SK-N-SH (cell line): ENCODE measurements at regions of chr20 and their contacts with region 1.

Region 1: GRCh38 chr20:40990542-40991120 is 38.0 kb upstream of the TOP1 start:
- DNase-seq: peak; percentile 84
- H3K4me3 ChIP-seq: no peak overlapping the region; a peak in 1 of 4 replicates
- H3K27ac ChIP-seq: no peak overlapping the region
- H3K4me1 ChIP-seq: peaks cover 2 to 11% of the 10 kb centered on the region in 2 experiments; a peak in 2 of 4 replicates
- H3K27me3 ChIP-seq: no peaks in the 10 kb centered on the region
- CTCF ChIP-seq: peak; percentile 85
- EP300 ChIP-seq: no peak
- RAD21 ChIP-seq: peak; percentile 94

Region 2: DNA sequence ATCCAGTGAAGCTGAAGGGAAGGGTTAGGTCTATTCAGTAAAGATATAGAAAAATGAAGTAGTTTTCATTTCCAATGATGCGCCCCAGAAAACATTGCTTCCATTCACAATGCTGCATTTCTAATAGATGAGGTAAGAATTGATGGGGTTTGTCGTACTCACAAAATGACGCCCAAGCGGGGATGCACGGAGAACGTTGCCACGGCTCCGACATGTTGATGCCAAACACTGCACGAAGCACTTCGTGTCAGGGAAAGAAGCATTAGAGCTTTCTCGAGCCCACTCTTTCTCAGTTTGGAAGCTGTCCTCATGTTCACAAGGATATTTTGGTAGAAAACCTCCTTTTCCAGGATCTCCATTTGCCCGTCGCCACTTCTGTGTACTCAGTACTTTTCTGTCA is 280.0 kb before region 1 on chr20:
- CTCF ChIA-PET with region 1: no interaction called
- POLR2A ChIA-PET with region 1: no interaction called
- DNase-seq: no peak
- H3K4me3 ChIP-seq: no peak overlapping the region
- H3K27ac ChIP-seq: no peak overlapping the region
- H3K4me1 ChIP-seq: no peaks in the 10 kb centered on the region; a peak in 1 of 4 replicates
- H3K27me3 ChIP-seq: no peaks in the 10 kb centered on the region
- CTCF ChIP-seq: no peak
- EP300 ChIP-seq: no peak
- RAD21 ChIP-seq: no peak

Region 3: GRCh38 chr20:40821429-40821828 is 169.2 kb before region 1 on chr20:
- CTCF ChIA-PET with region 1: no interaction called
- POLR2A ChIA-PET with region 1: no interaction called
- DNase-seq: no peak
- H3K4me3 ChIP-seq: no peak overlapping the region
- H3K27ac ChIP-seq: no peak overlapping the region
- H3K4me1 ChIP-seq: no peaks in the 10 kb centered on the region
- H3K27me3 ChIP-seq: no peaks in the 10 kb centered on the region
- CTCF ChIP-seq: no peak
- EP300 ChIP-seq: no peak
- RAD21 ChIP-seq: no peak

Region 4: DNA sequence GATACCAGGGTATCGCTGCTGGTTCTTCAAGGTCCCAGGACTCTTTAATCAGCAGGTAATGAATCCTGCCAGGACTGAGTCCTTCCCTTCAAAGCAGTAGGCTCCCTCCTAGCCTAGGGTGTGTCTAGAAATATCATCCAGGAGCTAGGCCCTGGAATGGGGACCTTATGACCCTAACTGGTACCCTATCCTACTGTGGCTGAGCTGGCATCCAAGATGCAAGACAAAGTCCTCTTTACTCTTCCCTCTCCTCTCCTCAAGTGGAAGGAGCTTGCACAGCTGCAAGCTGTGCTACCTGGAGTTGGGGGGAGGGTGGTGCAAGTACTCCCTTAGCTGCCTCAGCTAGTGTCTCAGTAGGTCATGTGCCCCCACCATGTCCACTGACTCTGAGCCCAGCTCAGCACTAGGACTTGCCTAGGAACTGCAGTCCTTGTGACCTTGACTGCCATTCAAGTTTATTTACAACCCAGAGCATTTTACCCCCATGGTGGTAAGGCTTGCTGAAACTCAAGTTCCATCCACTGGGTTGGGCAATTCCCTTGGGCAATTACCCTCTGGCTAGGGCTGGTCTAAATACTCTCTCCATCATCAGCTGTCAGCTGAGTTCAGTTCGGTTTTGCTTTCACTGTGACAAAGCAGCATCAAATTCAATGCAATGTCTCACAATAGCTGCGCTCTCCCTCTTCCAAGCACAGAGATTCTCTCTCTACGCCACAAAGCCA is 10.4 kb before region 1 on chr20:
- CTCF ChIA-PET with region 1: interaction called, 10 read pairs
- POLR2A ChIA-PET with region 1: no interaction called
- DNase-seq: no peak
- H3K4me3 ChIP-seq: no peak overlapping the region
- H3K27ac ChIP-seq: no peak overlapping the region
- H3K4me1 ChIP-seq: no peaks in the 10 kb centered on the region
- H3K27me3 ChIP-seq: no peaks in the 10 kb centered on the region
- CTCF ChIP-seq: no peak
- EP300 ChIP-seq: no peak
- RAD21 ChIP-seq: no peak

Region 5: DNA sequence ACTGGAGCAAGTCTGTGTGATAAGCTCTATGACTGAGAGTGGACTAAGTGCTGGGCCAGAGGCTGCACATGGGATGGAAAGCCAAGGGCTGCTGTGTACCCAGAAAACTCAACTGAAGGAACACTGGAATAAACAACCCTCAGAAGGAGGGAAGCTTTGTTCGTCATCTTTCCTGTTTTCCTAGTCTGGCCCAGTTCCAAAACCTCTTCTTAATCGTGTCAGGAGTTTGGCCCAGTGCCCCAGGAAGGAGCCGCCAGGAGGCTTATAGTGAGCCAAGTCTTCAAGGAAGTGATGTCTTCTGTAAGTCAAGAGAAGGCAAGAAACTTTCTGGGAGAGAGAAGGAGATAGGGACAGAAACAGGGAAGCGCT is 14.7 kb after region 1 on chr20:
- CTCF ChIA-PET with region 1: interaction called, 13 read pairs
- POLR2A ChIA-PET with region 1: no interaction called
- DNase-seq: no peak
- H3K4me3 ChIP-seq: peak overlapping the region in 1 of 2 experiments; percentile 25; a peak in 1 of 4 replicates
- H3K27ac ChIP-seq: peak overlapping the region; percentile 45 to 99; a peak in 3 of 4 replicates
- H3K4me1 ChIP-seq: peaks cover 5 to 61% of the 10 kb centered on the region in 2 experiments; a peak in 3 of 4 replicates
- H3K27me3 ChIP-seq: no peaks in the 10 kb centered on the region
- CTCF ChIP-seq: 0 out of 2 replicates have a peak, but pooled peaks have one; percentile 11
- EP300 ChIP-seq: peak in 1 of 2 experiments; percentile 75; a peak in 2 of 4 replicates
- RAD21 ChIP-seq: no peak

Region 6: GRCh38 chr20:41080866-41081265 is 90.2 kb after region 1 on chr20:
- CTCF ChIA-PET with region 1: interaction called, 24 read pairs
- POLR2A ChIA-PET with region 1: no interaction called
- DNase-seq: no peak
- H3K4me3 ChIP-seq: no peak overlapping the region
- H3K27ac ChIP-seq: no peak overlapping the region
- H3K4me1 ChIP-seq: peaks cover 15 to 27% of the 10 kb centered on the region in 2 experiments
- H3K27me3 ChIP-seq: no peaks in the 10 kb centered on the region
- CTCF ChIP-seq: no peak
- EP300 ChIP-seq: no peak
- RAD21 ChIP-seq: no peak

Region 7: DNA sequence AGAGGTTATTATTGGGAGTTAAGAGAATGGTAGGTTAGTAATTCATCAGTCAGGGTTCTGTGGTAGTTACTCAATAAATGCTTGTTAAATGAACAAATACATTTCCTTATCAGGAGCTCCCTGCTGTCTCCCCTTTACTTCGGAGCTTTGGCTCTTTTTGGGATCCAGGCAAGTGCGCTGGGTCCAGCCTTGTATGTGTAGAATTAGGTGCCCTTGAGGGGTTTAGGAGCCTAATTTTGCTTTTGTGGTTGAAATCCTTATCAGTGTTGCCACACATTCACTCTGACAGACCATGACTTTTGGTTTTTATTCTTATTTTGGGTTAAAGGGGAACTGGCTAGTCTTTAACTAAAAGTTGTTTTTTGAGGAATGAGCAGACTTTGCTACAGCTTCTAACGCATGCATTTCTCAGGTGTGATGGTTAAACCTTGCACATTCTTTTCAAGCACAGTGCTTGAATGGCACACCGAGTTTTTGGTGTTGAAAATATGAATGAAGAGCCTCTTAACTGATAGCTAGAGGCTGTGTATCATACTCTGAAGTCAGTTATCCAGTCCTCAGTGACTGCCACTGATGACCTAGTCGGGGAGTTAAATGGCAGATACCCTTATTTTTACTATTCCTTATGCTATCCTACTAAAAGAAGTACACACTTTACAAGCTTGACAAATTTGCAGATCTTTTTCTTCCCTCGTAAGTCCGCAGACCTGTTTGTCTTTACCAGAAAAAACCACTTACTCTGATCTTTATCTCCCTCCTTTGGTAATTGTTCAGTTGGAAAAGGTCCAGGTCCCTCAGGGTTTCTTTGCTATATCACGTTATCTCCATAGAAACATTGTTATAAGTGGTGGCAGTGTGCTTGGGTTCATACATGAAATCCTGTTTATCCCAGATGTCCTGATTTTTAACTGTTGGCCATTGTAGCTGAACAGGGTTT is 96.0 kb after region 1 on chr20:
- CTCF ChIA-PET with region 1: interaction called, 24 read pairs
- POLR2A ChIA-PET with region 1: no interaction called
- DNase-seq: peak; percentile 76
- H3K4me3 ChIP-seq: no peak overlapping the region; a peak in 1 of 4 replicates
- H3K27ac ChIP-seq: peak overlapping the region; percentile 32 to 98; a peak in 3 of 4 replicates
- H3K4me1 ChIP-seq: peaks cover 0 to 19% of the 10 kb centered on the region in 2 experiments; a peak in 2 of 4 replicates
- H3K27me3 ChIP-seq: no peaks in the 10 kb centered on the region
- CTCF ChIP-seq: no peak
- EP300 ChIP-seq: peak in 1 of 2 experiments; percentile 94; a peak in 2 of 4 replicates
- RAD21 ChIP-seq: no peak

Region 8: GRCh38 chr20:41095110-41095969 is 104.7 kb after region 1 on chr20:
- CTCF ChIA-PET with region 1: interaction called, 87 read pairs
- POLR2A ChIA-PET with region 1: interaction called, 5 read pairs
- DNase-seq: peak; percentile 58
- H3K4me3 ChIP-seq: no peak overlapping the region
- H3K27ac ChIP-seq: no peak overlapping the region
- H3K4me1 ChIP-seq: peaks cover 9 to 12% of the 10 kb centered on the region in 2 experiments
- H3K27me3 ChIP-seq: no peaks in the 10 kb centered on the region
- CTCF ChIP-seq: peak; percentile 96
- EP300 ChIP-seq: no peak
- RAD21 ChIP-seq: peak; percentile 89